ENCODE measurements at regions of chr7 and their contacts with region 1.

Region 1: DNA sequence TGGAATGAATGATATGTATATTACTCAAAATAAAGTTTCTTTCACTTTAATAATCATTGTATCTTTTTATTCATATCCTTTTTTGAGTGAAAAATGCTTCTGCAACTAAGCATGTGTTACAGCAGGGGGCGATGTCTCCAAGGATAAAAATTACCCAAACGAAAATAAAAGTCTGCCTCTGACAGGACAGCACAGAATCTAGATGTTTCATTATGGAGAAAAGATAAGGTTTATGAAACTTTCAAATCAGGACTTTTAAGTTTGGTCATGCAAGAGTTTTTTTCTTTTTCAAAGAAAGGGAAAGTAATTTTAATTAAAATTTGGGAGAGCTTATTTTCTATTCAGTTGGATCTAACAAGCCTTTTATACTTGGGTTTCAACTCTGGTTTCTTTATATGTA is 48.4 kb downstream of the TES start:
- DNase-seq: no peak
- ATAC-seq: peak; percentile 81 to 91 (median 82)
- H3K4me3 ChIP-seq: no peak overlapping the region
- H3K27ac ChIP-seq: no peak overlapping the region
- H3K4me1 ChIP-seq: peaks cover 0 to 4% (median 0%) of the 10 kb centered on the region in 4 donors
- H3K27me3 ChIP-seq: no peaks in the 10 kb centered on the region
- CTCF ChIP-seq: peak; percentile 65 to 93 (median 74)
- POLR2A ChIP-seq: no peak

Region 2: GRCh38 chr7:116377721-116378120 is 119.0 kb after region 1 on chr7:
- intact Hi-C with region 1: no loop called
- DNase-seq: no peak
- ATAC-seq: no peak
- H3K4me3 ChIP-seq: no peak overlapping the region
- H3K27ac ChIP-seq: no peak overlapping the region
- H3K4me1 ChIP-seq: no peaks in the 10 kb centered on the region
- H3K27me3 ChIP-seq: no peaks in the 10 kb centered on the region
- CTCF ChIP-seq: no peak
- POLR2A ChIP-seq: no peak

Region 3: GRCh38 chr7:116525913-116526861 is 267.5 kb after region 1 on chr7:
- intact Hi-C with region 1: loop called (anchors 10 kb)
- DNase-seq: peak; percentile 78 to 82 (median 79)
- ATAC-seq: peak; percentile 85 to 93 (median 90)
- H3K4me3 ChIP-seq: peak overlapping the region; percentile 42 to 67 (median 55)
- H3K27ac ChIP-seq: peak overlapping the region; percentile 39 to 69 (median 58)
- H3K4me1 ChIP-seq: peaks cover 0 to 12% (median 0%) of the 10 kb centered on the region in 4 donors
- H3K27me3 ChIP-seq: no peaks in the 10 kb centered on the region
- CTCF ChIP-seq: peak; percentile 87 to 89 (median 88)
- POLR2A ChIP-seq: no peak

Measured in right lobe of liver (tissue), 6 donors.